Pancreas (tissue), 10 donors: ENCODE measurements at regions of chr1 and their contacts with region 1.

Region 1: DNA sequence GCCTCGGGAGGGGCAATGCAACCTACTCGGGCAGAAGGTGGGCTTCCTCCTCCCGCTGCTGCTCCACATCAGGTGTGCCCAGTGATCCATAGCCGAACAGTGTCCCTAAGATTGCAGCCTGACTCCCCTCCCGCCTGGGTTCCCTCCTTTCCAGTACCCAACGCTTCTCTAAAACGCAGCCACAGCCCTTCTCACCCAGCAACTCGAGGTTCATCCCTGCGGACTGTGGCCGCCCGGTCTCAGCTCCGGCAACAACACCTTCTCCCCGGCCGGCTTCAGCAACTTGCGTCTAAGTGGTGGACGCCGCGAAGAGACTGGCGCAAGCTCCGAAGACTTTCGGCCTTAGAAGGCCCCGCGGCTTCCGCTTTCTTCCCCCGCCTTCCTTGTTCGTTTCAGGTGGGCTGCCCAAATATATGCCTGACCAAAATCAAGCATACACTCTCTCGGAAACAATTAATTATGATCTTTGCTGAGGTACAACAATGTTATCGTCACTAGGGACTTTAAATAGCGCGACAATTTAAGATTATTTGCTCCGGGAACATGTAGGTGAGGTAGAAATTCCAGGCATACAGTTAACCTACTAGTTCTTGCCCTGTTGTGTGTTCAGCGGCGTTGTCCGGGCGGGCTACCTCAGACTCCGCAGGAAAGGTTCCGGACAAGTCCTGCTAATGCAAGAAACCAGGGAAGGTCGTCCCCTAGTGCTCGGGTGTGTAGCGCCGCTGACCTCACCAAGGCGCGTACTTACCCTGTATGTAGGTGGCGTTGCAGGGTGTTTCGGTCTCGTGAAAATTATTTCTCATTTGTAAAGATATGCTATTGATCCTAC is at the start of gene RBBP5:
- DNase-seq: peak; percentile 86 to 96 (median 94)
- ATAC-seq: peak; percentile 99
- H3K4me3 ChIP-seq: peak within 1 kb of the TSS; percentile 72 to 88 (median 77)
- H3K27ac ChIP-seq: peak within 1 kb of the TSS; percentile 93 to 97 (median 94)
- H3K4me1 ChIP-seq: peaks cover 0 to 18% (median 10%) of the 10 kb centered on the region in 3 donors
- H3K27me3 ChIP-seq: no peaks in the 10 kb centered on the region
- CTCF ChIP-seq: peak; percentile 17 to 48 (median 33)
- total RNA-seq, gene RBBP5: 6.0 to 10.9 (median 8.2) TPM

Region 2: DNA sequence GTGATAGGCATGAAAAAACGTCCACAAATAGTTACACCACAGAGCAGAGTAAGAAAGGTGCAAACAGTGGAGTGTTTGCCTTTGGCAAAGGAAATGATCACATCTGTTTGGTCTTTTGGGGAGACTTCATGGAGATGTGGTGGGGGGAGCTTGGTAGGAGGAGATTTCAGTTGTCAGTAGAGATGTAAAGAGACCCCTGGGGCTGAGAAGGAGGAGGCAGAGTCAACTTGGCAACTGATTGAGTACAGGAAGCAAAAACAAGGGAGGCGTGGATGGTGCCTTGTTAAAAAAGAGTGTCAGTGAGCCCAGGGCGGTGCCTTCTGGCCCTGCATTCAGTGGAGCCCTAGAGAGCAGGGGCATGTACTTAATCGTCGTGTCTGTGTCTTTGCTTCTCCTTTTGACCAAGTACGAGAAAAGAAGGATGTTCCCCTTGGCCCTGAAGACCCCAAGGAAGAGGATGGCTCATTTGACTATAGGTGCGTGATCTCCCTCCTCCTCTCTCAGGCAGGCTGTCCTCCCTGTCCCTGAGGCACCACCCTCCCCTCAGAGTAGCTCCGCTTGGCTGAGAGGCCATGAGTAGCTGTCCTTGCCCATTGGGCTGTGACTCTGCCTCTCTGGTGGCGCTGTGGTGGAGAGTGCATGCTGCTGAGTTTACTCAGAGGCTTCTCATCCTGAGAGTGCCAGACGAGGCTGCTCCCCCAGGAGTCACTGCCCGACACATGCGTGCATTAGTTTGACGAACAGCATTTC is 109.3 kb before region 1 on chr1:
- intact Hi-C with region 1: no loop called
- DNase-seq: no peak
- ATAC-seq: no peak
- H3K4me3 ChIP-seq: no peak overlapping the region
- H3K27ac ChIP-seq: no peak overlapping the region
- H3K4me1 ChIP-seq: no peaks in the 10 kb centered on the region
- H3K27me3 ChIP-seq: no peaks in the 10 kb centered on the region
- CTCF ChIP-seq: no peak

Region 3: DNA sequence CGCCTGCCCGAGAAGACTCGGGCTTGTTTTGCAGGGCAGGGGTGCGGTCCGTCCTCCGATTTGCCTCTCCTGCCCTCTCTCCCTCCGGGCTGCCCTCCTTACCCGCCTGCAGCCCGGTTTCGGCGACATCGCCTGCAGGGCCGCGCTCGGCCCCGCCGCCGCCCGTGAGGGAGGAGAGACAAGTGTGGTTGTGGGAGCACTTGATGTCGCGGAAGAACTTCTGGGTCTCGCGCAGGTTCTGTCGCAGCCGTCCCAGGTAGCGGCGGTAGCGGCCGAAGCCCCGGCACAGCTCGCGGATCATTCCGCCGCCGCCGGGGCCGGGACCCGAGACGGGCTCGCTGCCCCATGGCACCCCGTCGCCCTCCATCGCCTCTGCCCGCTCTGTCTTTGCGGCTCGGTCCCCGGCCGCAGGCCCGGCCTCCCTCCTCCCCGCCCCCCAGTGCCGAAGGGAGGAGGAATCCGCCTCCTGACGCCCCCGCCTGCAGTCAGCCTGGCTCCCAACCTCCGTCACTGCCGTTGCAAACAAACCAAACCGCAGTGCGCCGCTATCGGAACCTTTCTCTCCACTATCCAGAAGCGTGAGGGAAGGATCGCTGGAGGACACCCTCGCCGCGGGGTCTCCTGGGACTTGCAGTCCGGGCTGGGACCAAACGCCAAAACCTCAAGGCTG is 89.4 kb after region 1 on chr1 and contains the start of gene DSTYK:
- intact Hi-C with region 1: loop called in 1 of 3 experiments (anchors 10 kb)
- DNase-seq: peak; percentile 85 to 96 (median 90)
- ATAC-seq: peak; percentile 94 to 97 (median 95)
- H3K4me3 ChIP-seq: peak within 1 kb of the TSS; percentile 88 to 97 (median 94)
- H3K27ac ChIP-seq: peak within 1 kb of the TSS; percentile 76 to 95 (median 86)
- H3K4me1 ChIP-seq: peaks cover 0 to 5% (median 0%) of the 10 kb centered on the region in 3 donors
- H3K27me3 ChIP-seq: no peaks in the 10 kb centered on the region
- CTCF ChIP-seq: no peak
- total RNA-seq, gene DSTYK: 3.5 to 9.0 (median 4.7) TPM

Region 4: GRCh38 chr1:205313563-205314308 is 191.9 kb after region 1 on chr1:
- intact Hi-C with region 1: no loop called
- DNase-seq: peak in 2 of 6 donors; percentile 45 to 67
- ATAC-seq: peak in 3 of 4 donors; percentile 5 to 44 (median 35)
- H3K4me3 ChIP-seq: peak overlapping the region in 2 of 4 donors; percentile 10 to 19
- H3K27ac ChIP-seq: peak overlapping the region; percentile 37 to 93 (median 74)
- H3K4me1 ChIP-seq: peaks cover 54 to 64% (median 62%) of the 10 kb centered on the region in 3 donors
- H3K27me3 ChIP-seq: no peaks in the 10 kb centered on the region
- CTCF ChIP-seq: no peak